Colonic mucosa (tissue), 4 donors: ENCODE measurements at regions of chr4 and their contacts with region 1.

Region 1: DNA sequence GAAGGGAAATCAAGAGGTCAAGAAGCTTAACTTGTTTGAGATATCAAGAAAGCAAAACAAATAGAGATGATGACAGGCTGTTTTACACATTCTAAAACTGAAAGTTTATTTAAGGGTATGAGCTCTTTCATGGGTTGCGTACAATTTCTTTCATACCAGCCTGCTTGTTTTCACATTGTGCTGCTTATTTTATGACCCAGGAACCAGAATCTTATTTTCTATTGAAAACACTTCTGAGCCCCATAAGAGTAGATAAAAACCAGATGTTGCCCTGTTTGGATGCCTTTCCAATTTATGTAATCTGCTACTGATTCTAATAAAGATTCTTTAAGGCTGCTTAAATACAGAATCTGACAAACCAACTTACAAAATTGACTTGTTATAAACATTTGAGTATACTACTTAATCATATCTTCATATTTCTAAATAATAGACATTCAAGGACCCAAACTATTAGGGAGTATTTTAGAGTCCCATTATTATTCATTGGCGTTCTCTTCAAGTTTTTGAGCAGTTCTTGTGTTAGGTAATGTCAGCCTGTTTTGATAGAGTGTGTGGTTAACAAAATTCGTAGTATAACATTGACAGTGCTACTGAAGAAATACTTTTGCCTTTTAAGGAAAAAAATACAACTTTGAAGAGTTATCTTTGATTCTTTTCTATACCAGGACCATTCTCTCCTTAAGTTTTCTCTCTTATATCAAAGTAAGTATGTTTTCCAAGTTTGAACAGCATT is 74.4 kb downstream of the PDLIM5 start:
- DNase-seq: no peak
- H3K4me3 ChIP-seq: no peak overlapping the region
- H3K27ac ChIP-seq: no peak overlapping the region
- H3K4me1 ChIP-seq: no peaks in the 10 kb centered on the region
- H3K27me3 ChIP-seq: no peaks in the 10 kb centered on the region
- CTCF ChIP-seq: no peak

Region 2: GRCh38 chr4:93719552-93719951 is 806.6 kb before region 1 on chr4:
- intact Hi-C with region 1: no loop called
- DNase-seq: no peak
- H3K4me3 ChIP-seq: no peak overlapping the region
- H3K27ac ChIP-seq: no peak overlapping the region
- H3K4me1 ChIP-seq: no peaks in the 10 kb centered on the region
- H3K27me3 ChIP-seq: no peaks in the 10 kb centered on the region
- CTCF ChIP-seq: no peak

Region 3: DNA sequence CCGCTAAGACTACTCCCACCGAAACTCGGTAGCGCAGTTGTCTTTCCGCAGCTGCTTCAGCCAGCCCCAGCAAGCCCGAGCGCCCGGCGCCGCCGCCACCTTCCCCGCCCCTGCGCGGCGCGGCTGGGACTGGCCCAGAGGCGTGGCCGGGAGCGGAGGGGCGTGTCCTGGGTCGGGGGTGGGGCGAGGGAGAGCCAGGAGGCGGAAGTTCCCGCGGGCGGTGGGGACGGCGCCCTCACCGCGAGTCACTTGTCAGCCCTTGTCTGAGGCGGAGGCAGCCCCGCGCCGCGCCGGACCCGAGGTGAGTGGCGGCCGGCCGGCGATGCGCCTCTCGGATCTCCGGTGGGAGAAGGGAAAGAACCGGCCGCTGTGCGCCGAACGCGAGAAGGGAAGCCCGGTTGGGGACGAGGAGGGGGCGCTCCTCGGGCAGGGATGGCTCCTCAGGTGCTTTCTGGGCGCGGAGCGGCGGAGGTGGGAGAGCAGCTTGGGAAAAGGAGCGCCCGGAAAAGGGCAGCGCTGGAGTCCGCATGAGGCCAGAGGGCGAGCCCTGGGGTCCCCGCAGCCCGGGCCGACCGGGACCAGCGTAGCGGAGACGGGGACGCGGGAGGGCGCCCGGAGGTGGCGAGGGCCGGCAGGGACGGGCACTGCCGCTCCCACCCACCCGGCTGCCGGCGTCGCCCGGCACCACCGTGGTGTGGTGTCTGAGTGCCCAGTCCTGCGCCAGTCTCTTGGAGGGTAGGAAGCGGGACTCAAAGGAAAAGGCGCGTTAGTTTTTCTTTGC is 74.3 kb before region 1 on chr4 and contains the start of gene PDLIM5:
- intact Hi-C with region 1: loop called (anchors 10 kb)
- DNase-seq: peak; percentile 92
- H3K4me3 ChIP-seq: peak within 1 kb of the TSS; percentile 95
- H3K27ac ChIP-seq: peak within 1 kb of the TSS; percentile 97
- H3K4me1 ChIP-seq: peaks cover 5% of the 10 kb centered on the region
- H3K27me3 ChIP-seq: no peaks in the 10 kb centered on the region
- CTCF ChIP-seq: no peak
- total RNA-seq, gene PDLIM5: 129 to 168 TPM